RWPE1 (cell line): ENCODE measurements at regions of chr9 and their contacts with region 1.

Region 1: DNA sequence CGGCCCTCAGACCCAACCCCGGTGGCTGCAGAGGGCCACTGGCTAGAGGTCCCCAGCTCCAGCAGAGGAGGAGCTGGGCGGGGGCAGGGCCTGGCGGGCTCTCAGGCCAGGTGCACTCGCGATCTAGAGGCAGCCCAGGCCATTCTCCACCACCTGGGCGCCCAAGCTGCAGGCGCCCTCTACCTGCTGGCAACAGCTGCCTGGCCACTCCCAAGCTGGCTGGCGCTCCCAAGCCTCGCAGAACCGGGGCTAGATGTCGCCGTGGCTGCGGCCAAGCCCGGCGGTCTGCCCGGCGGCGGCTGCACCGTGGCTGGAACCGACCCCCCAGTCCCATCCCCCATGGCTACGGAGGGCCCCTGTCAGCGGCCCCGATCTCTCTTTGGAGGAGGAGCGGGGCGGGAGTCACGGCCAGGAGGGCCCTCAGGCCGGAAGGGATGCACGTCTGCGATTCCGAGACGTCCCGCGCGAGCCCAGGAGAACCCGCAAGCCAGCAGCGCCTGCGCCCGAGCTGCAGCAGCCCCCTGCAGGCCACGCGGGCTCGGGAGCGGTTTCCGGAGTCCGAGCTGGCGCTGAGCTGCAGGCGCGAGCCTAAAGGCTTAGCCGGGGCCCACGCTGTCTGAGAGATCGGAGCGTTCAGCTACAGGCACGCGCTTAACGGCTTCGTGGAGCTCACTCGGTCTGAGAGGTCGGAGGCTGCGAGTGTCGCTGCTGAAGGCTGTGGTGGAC is 44.3 kb upstream of the BICD2 start:
- DNase-seq: peak; percentile 74
- H3K27ac ChIP-seq: no peak overlapping the region
- CTCF ChIP-seq: peak; percentile 44

Region 2: GRCh38 chr9:92790542-92791527 is 18.1 kb before region 1 on chr9:
- CTCF ChIA-PET with region 1: interaction called, 12 read pairs
- POLR2A ChIA-PET with region 1: no interaction called
- DNase-seq: peak; percentile 92
- H3K27ac ChIP-seq: no peak overlapping the region
- CTCF ChIP-seq: peak; percentile 96

Region 3: DNA sequence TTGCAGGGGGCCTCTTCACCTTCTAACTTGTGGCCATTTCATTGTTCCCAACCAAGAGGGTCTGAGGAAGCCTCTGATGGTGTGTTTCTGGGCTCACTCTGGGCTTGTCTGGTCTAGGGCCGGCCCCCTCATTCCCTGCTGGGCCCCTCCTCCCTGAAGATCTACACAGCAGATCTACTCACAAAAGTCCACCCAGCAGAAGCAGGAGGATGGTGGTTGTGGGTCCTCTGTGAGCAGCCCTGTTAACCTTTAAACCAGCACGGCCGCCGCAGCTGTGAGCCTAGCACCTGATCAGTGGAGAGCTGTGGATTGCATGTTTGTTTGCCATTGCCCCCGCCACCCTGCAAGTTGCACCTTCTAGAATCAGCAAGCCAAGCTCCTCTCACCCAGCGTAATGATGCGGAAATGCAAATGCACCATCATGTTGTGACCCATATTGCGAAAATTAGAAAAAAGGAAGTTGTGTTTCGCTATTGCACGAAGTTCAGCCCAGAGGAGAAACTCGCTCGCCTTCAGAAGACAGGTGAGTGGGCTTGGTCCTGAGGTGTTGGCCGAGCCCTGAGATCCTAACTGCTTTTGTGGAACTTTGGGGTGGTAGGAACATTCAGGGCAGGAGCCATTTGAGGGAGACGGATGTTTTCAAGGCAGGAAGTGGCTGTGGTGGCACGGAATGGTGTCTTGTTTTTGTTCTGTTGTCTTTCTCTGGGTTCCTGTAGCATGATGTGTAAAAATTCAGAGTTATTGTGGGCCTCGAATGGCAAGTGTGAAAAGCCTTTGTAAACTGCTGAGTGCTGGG is 155.1 kb after region 1 on chr9:
- CTCF ChIA-PET with region 1: no interaction called
- POLR2A ChIA-PET with region 1: no interaction called
- DNase-seq: no peak
- H3K27ac ChIP-seq: no peak overlapping the region
- CTCF ChIP-seq: no peak